Activated CD4-positive, alpha-beta T cell treated with anti-CD3 and anti-CD28 coated beads for 36 hours (primary cell): ENCODE measurements at regions of chr5 and their contacts with region 1.

Region 1: DNA sequence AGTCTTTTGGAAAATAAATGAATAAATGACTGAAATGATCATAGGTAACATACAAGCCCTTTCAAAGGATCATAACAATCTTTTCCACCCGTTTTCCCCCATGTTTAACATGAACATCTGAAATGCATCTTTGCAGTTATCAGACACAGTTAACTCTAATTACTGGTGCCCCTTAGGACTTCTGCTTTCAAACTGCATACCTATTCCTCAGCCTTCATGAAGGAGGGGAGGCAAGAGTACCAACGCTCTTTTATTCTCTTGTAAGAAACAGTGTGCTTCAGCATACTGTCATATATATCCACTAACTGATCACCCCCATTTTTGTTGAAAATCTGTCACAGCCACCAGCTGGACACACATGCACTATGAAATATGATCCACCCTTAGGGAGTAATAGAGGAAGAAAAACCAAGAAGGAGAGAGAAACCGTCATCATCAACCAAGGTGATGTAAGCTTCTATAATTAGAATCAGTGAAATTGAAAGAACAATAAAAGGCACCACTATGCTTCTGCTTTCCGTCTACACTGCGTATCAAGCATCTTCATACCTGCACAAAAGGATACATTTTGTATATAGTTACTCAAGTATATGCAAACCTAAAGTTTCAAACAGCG is 98.7 kb downstream of the RAPGEF6 start:
- DNase-seq: peak; percentile 20
- ATAC-seq: peak; percentile 48
- H3K4me3 Mint-ChIP-seq: peak overlapping the region; percentile 26
- H3K27ac Mint-ChIP-seq: peak overlapping the region; percentile 86
- H3K4me1 Mint-ChIP-seq: peaks cover 86% of the 10 kb centered on the region
- H3K27me3 Mint-ChIP-seq: no peaks in the 10 kb centered on the region

Region 2: GRCh38 chr5:129904102-129904666 is 1632.1 kb before region 1 on chr5 and contains the start of gene CHSY3:
- CTCF ChIA-PET with region 1: no interaction called
- POLR2A ChIA-PET with region 1: no interaction called
- intact Hi-C with region 1: no loop called
- DNase-seq: peak; percentile 69
- ATAC-seq: peak; percentile 89
- H3K4me3 Mint-ChIP-seq: peak within 1 kb of the TSS; percentile 63
- H3K27ac Mint-ChIP-seq: no peak within 1 kb of the TSS
- H3K4me1 Mint-ChIP-seq: peaks cover 11% of the 10 kb centered on the region
- H3K27me3 Mint-ChIP-seq: peaks cover 41% of the 10 kb centered on the region
- total RNA-seq, gene CHSY3: not detected

Region 3: DNA sequence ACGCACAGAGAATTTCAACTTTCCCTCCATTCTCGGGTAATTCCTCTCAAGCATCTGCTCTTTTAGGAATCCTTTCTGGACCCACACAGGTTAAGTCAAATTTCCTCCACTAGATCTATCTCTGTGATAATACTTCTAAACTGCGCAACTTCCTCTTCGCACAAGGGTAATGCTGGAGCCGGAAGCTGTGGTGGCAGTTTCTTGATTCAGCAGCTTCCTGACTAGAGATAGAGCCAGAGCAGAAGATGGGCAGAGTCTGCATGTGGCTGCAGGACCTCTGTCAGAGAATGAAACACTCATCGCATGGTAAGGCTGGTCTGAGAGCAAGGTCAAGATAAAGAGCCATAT is 283.5 kb before region 1 on chr5:
- CTCF ChIA-PET with region 1: no interaction called
- POLR2A ChIA-PET with region 1: no interaction called
- intact Hi-C with region 1: loop called in 1 of 2 experiments (anchors 10 kb)
- DNase-seq: peak; percentile 87
- ATAC-seq: peak; percentile 70
- H3K4me3 Mint-ChIP-seq: peak overlapping the region; percentile 84
- H3K27ac Mint-ChIP-seq: peak overlapping the region; percentile 98
- H3K4me1 Mint-ChIP-seq: peaks cover 69% of the 10 kb centered on the region
- H3K27me3 Mint-ChIP-seq: no peaks in the 10 kb centered on the region

Region 4: DNA sequence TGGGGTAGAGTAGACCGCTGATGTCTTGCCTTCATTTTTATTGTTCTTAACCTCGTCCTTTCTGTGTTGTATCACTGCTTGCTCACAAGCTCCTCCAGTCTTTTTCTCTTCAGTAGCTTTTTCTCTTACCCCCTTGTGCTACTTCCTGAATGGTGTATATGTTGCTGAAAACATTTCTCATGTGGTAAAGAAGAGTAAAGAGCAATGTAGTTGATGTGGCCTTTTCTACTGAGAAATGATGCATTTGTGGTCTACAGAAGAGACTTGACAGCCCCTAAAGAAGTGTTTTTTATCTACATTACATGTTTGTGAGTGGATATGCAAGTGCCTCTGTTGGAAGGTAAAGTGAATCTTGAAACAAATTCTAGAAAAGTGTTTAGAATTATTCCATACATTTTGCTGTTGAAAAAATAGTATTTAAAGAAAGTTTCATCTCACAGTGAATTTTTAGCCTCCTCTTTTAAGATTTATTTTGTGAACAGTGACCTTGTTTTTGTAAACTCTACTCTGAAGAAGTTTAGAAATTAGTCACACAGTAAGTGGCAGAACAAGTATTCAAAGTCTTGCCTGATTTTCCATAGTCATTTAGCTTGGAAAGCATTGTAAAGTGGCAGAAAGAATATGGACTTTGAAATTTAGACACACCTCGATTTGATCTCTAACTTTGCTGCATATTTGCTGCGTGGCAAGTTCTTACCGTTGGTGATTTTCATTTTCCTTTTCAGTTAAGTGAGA is 255.0 kb before region 1 on chr5:
- CTCF ChIA-PET with region 1: no interaction called
- POLR2A ChIA-PET with region 1: no interaction called
- intact Hi-C with region 1: loop called in 1 of 2 experiments (anchors 5 kb)
- DNase-seq: no peak
- ATAC-seq: peak; percentile 78
- H3K4me3 Mint-ChIP-seq: peak overlapping the region; percentile 74
- H3K27ac Mint-ChIP-seq: peak overlapping the region; percentile 95
- H3K4me1 Mint-ChIP-seq: peaks cover 90% of the 10 kb centered on the region
- H3K27me3 Mint-ChIP-seq: no peaks in the 10 kb centered on the region

Region 5: DNA sequence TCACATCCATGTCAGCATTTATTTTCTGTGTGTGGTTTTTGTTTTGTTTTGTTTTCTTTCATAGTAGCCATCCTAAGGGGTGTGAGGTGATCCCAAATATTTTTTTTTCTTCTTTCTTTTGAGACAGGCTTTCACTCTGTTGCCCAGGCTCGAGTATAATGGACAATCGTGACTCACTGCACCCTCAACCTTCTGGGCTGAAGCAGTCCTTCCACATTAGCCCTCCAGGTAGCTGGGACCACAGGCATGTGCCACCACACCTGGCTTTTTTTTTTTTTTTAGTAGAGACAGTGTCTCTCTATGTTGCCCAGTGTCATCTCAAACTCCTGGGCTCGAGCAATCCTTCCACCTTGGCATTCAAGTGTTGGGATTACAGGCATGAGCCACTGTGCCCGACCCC is 213.4 kb before region 1 on chr5:
- CTCF ChIA-PET with region 1: no interaction called
- POLR2A ChIA-PET with region 1: no interaction called
- intact Hi-C with region 1: no loop called
- DNase-seq: no peak
- ATAC-seq: no peak
- H3K4me3 Mint-ChIP-seq: no peak overlapping the region
- H3K27ac Mint-ChIP-seq: peak overlapping the region; percentile 84
- H3K4me1 Mint-ChIP-seq: peaks cover 65% of the 10 kb centered on the region
- H3K27me3 Mint-ChIP-seq: no peaks in the 10 kb centered on the region

Region 6: DNA sequence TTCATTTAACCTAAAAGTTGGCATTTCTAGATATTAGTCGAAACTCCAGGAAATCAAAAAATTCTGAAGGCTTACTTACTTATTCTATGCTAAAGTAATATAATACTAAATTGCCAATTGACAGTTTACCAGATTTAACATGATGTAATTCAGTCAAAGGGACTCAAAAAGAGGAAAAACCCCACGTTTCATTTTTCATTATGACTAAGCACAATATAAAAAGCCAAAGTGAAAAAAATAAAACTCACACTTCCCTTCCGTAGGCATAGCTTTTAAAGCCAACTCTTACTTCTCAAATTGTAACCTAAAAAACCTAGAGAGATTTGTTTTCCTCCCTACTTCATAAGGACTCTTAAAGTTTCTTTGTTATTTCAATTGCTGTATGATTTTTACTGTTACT is 47.9 kb before region 1 on chr5:
- CTCF ChIA-PET with region 1: interaction called, 5 read pairs
- POLR2A ChIA-PET with region 1: interaction called, 10 read pairs
- intact Hi-C with region 1: loop called (anchors 2 to 10 kb)
- DNase-seq: no peak
- ATAC-seq: peak; percentile 85
- H3K4me3 Mint-ChIP-seq: peak overlapping the region; percentile 21
- H3K27ac Mint-ChIP-seq: peak overlapping the region; percentile 42
- H3K4me1 Mint-ChIP-seq: peaks cover 34% of the 10 kb centered on the region
- H3K27me3 Mint-ChIP-seq: no peaks in the 10 kb centered on the region

Region 7: DNA sequence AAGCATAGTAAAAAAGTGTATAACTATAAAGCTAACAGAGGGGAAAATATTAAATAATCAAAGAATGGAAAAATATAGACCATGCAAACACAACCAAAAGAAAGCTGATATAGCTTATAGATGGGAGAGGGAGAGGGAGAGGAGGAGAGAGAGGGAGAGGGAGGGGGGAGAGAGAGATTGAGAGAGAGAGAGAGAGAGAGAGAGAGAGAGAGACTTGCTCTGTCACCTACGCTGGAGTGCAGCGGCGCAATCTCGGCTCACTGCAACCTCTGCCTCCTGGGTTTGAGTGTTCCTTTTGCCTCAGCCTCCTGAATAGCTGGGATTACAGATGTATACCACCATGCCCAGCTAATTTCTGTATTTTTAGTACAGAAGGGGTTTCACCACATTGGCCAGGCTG is 11.9 kb before region 1 on chr5:
- CTCF ChIA-PET with region 1: interaction called, 12 read pairs
- POLR2A ChIA-PET with region 1: interaction called, 4 read pairs
- intact Hi-C with region 1: no loop called
- DNase-seq: no peak
- ATAC-seq: no peak
- H3K4me3 Mint-ChIP-seq: no peak overlapping the region
- H3K27ac Mint-ChIP-seq: peak overlapping the region; percentile 40
- H3K4me1 Mint-ChIP-seq: peaks cover 73% of the 10 kb centered on the region
- H3K27me3 Mint-ChIP-seq: no peaks in the 10 kb centered on the region

Region 8: DNA sequence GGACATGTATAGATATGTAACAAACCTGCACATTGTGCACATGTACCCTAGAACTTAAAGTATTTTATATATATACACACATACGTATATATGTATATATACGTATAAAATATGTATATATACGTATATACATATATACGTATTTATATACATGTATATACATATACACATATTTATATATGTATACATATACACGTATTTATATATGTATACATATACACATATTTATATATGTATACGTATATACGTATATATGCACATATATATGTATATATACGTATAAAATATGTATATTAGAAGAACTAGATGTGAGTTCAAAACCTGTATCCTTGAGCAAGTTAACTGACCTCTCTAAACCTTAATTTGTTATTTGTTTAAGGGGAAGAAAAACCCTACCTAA is 199.1 kb after region 1 on chr5:
- CTCF ChIA-PET with region 1: no interaction called
- POLR2A ChIA-PET with region 1: no interaction called
- intact Hi-C with region 1: no loop called
- DNase-seq: no peak
- ATAC-seq: no peak
- H3K4me3 Mint-ChIP-seq: no peak overlapping the region
- H3K27ac Mint-ChIP-seq: no peak overlapping the region
- H3K4me1 Mint-ChIP-seq: no peaks in the 10 kb centered on the region
- H3K27me3 Mint-ChIP-seq: no peaks in the 10 kb centered on the region

Region 9: GRCh38 chr5:131747180-131748105 is 211.1 kb after region 1 on chr5:
- CTCF ChIA-PET with region 1: no interaction called
- POLR2A ChIA-PET with region 1: no interaction called
- intact Hi-C with region 1: loop called in 1 of 2 experiments (anchors 1 kb)
- DNase-seq: no peak
- ATAC-seq: peak; percentile 92
- H3K4me3 Mint-ChIP-seq: peak overlapping the region; percentile 54
- H3K27ac Mint-ChIP-seq: peak overlapping the region; percentile 93
- H3K4me1 Mint-ChIP-seq: peaks cover 46% of the 10 kb centered on the region
- H3K27me3 Mint-ChIP-seq: no peaks in the 10 kb centered on the region

Region 10: GRCh38 chr5:132019857-132020555 is 483.7 kb after region 1 on chr5:
- CTCF ChIA-PET with region 1: no interaction called
- POLR2A ChIA-PET with region 1: no interaction called
- intact Hi-C with region 1: loop called in 1 of 2 experiments (anchors 5 kb)
- DNase-seq: peak; percentile 89
- ATAC-seq: peak; percentile 90
- H3K4me3 Mint-ChIP-seq: peak overlapping the region; percentile 35
- H3K27ac Mint-ChIP-seq: peak overlapping the region; percentile 91
- H3K4me1 Mint-ChIP-seq: peaks cover 41% of the 10 kb centered on the region
- H3K27me3 Mint-ChIP-seq: peaks cover 36% of the 10 kb centered on the region